Activated CD4-positive, alpha-beta T cell treated with anti-CD3 and anti-CD28 coated beads, Interleukin-2, amount 10 ng/mL, durations not matched to agents 24 days and 14 days (primary cell): ENCODE measurements at regions of chr14 and their contacts with region 1.

Region 1: GRCh38 chr14:58072288-58073071 is 79.5 kb downstream of the ARMH4 start:
- DNase-seq: peak; percentile 84
- H3K4me3 Mint-ChIP-seq: no peak overlapping the region
- H3K27ac Mint-ChIP-seq: no peak overlapping the region
- H3K4me1 Mint-ChIP-seq: no peaks in the 10 kb centered on the region
- H3K27me3 Mint-ChIP-seq: peaks cover 3% of the 10 kb centered on the region

Region 2: GRCh38 chr14:57486767-57487379 is 585.6 kb before region 1 on chr14:
- intact Hi-C with region 1: loop called (anchors 1 kb)
- DNase-seq: no peak
- H3K4me3 Mint-ChIP-seq: no peak overlapping the region
- H3K27ac Mint-ChIP-seq: no peak overlapping the region
- H3K4me1 Mint-ChIP-seq: no peaks in the 10 kb centered on the region
- H3K27me3 Mint-ChIP-seq: peaks cover 2% of the 10 kb centered on the region

Region 3: GRCh38 chr14:57533214-57533613 is 539.3 kb before region 1 on chr14:
- intact Hi-C with region 1: loop called (anchors 5 kb)
- DNase-seq: peak; percentile 57
- H3K4me3 Mint-ChIP-seq: no peak overlapping the region
- H3K27ac Mint-ChIP-seq: no peak overlapping the region
- H3K4me1 Mint-ChIP-seq: no peaks in the 10 kb centered on the region
- H3K27me3 Mint-ChIP-seq: no peaks in the 10 kb centered on the region

Region 4: GRCh38 chr14:57692671-57693070 is 379.8 kb before region 1 on chr14:
- intact Hi-C with region 1: loop called (anchors 5 kb)
- DNase-seq: no peak
- H3K4me3 Mint-ChIP-seq: no peak overlapping the region
- H3K27ac Mint-ChIP-seq: no peak overlapping the region
- H3K4me1 Mint-ChIP-seq: no peaks in the 10 kb centered on the region
- H3K27me3 Mint-ChIP-seq: no peaks in the 10 kb centered on the region

Region 5: DNA sequence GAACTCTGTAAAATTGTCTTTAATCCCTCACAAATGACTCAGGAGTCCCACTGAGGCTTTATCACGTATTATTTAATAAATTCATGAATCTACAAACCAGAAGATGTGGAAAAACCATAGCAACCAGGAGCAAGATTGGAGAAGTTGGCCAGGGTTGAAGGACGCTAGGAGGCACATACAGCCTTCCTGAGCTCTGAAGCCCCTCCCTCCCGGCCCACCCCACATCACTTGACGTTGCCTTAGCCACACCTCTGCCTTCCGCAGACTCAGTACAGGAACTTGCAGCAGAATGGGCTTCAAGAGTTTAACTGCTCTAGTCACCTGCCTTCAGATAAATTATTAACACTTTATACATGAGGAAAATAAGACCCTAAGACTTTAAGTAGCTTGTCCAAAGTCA is 240.5 kb before region 1 on chr14:
- intact Hi-C with region 1: no loop called
- DNase-seq: no peak
- H3K4me3 Mint-ChIP-seq: no peak overlapping the region
- H3K27ac Mint-ChIP-seq: no peak overlapping the region
- H3K4me1 Mint-ChIP-seq: no peaks in the 10 kb centered on the region
- H3K27me3 Mint-ChIP-seq: peaks cover 2% of the 10 kb centered on the region

Region 6: GRCh38 chr14:57871459-57872080 is 200.9 kb before region 1 on chr14:
- intact Hi-C with region 1: loop called (anchors 10 kb)
- DNase-seq: peak; percentile 57
- H3K4me3 Mint-ChIP-seq: no peak overlapping the region
- H3K27ac Mint-ChIP-seq: no peak overlapping the region
- H3K4me1 Mint-ChIP-seq: no peaks in the 10 kb centered on the region
- H3K27me3 Mint-ChIP-seq: peaks cover 6% of the 10 kb centered on the region